AG04449 (cell line): ENCODE measurements at regions of chr12 and their contacts with region 1.

Region 1: DNA sequence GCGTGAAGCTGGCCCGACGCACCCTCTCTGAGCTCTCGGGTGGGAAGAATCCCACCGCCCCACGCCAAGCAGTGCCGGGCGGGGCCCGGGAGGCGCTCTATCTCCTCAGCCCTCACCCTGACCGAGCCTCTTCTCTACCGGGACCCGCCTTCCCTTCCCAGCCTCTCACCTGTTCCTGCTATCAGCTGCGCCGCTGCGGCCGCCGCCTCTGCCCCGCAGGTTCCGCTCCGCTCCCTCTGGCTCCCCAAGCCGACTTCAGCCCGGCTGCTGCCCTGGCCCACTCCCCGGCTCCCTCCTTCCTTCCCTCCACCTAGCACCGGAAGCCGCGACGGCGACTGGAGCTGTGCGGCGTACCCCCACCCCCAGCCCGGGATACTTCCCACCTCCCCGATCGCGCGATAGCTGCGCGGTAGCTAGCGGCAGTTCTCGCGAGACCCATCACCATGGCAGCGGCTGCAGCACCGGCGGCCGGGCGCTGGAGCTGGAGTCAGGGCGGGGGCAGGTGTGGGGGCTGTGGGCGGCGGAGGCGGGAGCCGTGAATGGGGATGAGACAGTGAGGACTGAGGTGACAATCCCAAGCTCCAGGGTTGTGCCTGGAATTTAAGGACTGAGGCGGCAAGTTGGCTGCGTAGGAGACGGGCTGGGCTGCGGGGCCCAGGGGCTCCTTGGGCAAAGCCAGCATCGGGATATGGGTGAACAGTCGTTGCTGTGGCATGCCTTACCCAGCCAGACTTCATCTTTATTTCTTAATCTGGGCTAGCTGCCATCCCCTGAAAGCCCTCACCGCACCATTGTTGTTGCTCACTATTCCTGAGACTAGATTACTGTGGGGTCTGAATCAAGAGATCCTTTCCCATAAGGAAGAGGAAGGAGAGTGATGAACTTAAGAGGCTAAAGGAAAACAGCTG is at the start of gene ARF3:
- DNase-seq: no peak
- H3K4me3 ChIP-seq: peak within 1 kb of the TSS; percentile 99
- CTCF ChIP-seq: no peak

Region 2: GRCh38 chr12:48910196-48910595 is 47.2 kb before region 1 on chr12:
- CTCF ChIA-PET with region 1: no interaction called
- POLR2A ChIA-PET with region 1: no interaction called
- DNase-seq: no peak
- H3K4me3 ChIP-seq: no peak overlapping the region
- CTCF ChIP-seq: no peak

Region 3: GRCh38 chr12:48924617-48925303 is 32.6 kb before region 1 on chr12:
- CTCF ChIA-PET with region 1: interaction called, 502 read pairs
- POLR2A ChIA-PET with region 1: interaction called, 3 read pairs
- DNase-seq: no peak
- H3K4me3 ChIP-seq: peak overlapping the region; percentile 89
- CTCF ChIP-seq: peak; percentile 67

Region 4: DNA sequence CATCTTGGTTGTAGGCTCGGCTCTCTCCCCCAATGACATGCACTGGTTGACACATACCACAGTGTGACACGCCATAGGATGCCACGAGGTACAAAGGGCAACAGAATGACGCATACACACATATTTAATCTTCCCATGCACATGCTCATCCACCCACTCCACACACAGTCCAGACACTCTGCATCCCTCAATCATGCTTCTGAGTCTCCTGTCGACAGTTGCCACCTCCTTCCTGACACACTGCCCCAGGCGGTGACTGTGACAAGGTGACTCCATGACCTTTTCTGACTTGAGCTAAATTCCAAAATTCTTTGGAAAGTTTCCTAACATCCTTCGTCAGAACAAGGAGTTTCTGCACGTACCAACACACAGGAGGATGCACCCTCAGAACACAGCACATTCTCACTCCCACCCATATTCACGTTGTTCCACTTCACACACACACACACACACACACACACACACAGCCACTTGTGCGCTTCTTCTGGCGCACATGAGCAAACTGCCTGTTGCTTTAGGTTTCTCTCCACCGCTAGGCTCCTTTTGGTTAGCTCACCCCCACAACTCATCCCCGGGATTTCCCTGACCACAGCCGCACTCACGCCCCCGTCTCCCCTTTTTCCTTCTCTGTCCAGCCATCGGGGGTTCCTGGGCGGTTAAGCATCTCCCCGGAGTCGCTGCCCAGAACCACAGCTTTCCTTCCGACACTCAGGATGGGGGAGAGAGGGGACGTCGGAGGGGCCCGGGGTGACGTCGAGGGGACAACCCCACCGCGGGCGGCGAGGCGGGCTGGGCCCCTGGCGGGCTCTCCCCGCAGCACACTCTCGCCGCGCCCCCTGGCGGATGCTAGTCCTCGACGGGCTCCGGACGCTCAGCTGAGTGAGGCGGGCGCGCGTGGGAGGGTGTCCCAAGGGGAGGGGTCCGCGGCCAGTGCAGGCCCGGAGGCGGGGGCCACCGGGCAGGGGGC is 20.2 kb after region 1 on chr12:
- CTCF ChIA-PET with region 1: interaction called, 1,340 read pairs
- POLR2A ChIA-PET with region 1: no interaction called
- DNase-seq: no peak
- H3K4me3 ChIP-seq: no peak overlapping the region
- CTCF ChIP-seq: peak; percentile 92

Region 5: GRCh38 chr12:48995061-48995879 is 37.9 kb after region 1 on chr12:
- CTCF ChIA-PET with region 1: interaction called, 1,340 read pairs
- POLR2A ChIA-PET with region 1: no interaction called
- DNase-seq: no peak
- H3K4me3 ChIP-seq: peak overlapping the region; percentile 25
- CTCF ChIP-seq: peak; percentile 83

Region 6: GRCh38 chr12:49309391-49309790 is 352.0 kb after region 1 on chr12:
- CTCF ChIA-PET with region 1: no interaction called
- POLR2A ChIA-PET with region 1: no interaction called
- DNase-seq: no peak
- H3K4me3 ChIP-seq: no peak overlapping the region
- CTCF ChIP-seq: no peak